IMR-90 (cell line): ENCODE measurements at regions of chr1 and their contacts with region 1.

Region 1: DNA sequence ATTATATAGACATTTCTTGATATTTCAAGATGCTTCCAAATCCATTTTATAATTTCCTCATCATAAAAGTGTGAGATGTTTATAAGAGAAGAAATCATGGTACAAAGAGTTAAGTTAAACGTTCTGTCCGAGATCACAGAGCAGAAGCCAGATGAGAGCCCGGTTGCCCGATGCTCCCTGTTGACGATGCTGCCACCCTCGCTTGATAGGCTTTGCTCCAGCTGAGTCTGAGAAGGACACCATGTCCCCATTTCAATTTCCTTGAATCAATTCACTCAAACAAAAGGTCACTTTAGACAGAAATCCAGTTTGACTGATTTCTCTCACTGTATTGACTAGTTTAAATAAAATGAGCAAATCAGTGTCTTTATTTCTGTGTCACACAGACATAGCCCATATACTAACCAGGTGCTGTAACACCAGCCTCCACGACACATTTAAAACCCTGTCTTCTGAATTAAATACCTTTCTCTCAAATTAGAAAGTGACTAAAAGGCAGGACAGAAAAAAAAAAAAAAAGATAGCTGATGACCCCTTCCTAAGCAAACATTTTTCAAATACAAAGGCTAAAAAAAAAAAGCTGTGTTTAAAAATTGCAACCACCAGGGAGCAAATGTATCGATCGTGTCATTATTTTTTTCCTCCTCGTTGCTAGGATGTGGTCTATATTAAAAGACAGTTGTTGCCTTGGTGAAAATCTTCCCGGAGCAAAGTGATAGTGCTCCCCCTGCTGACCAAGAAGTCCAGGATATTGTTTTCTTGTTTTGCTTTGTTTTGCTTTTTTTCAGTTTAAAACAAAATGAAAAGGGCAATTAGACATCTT is 35.2 kb downstream of the DNASE2B start:
- DNase-seq: peak; percentile 78
- ATAC-seq: peak; percentile 85
- H3K4me3 ChIP-seq: no peak overlapping the region
- H3K27ac ChIP-seq: no peak overlapping the region
- H3K4me1 ChIP-seq: no peaks in the 10 kb centered on the region; the same call in 1 of the 2 replicates
- H3K27me3 ChIP-seq: no peaks in the 10 kb centered on the region
- CTCF ChIP-seq: peak; percentile 85
- POLR2A ChIP-seq: no peak
- RAD21 ChIP-seq: peak; percentile 91

Region 2: DNA sequence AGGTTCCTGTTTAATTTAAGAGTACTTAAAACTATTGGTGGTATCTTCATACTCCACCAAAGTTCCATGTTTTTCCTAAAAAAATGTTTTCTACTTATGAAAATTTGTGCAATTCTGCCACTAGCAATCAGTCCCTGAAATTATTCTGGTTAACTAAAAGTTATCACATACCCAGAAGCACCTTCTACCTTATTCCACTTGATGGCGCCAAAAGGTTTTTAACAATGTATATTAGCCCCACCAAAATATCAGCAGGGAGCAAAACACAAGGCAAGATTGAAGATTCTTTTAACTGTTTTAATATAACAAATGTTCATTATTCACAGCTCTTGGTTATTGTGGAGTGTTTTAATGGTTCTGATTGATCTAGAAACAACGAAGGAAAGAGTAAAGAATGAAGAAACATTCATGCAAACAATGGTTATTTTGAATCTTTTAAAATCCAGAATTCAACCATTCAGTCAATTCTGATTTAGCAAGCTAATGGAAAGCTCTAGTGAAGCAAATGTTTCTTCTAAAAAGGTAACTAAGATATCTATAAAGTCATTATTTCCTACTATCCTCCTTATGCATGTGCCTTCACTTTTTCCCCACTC is 501.7 kb before region 1 on chr1:
- CTCF ChIA-PET with region 1: no interaction called
- POLR2A ChIA-PET with region 1: no interaction called
- dilution Hi-C with region 1: no loop called
- in situ Hi-C with region 1: loop called (anchors 10 kb)
- intact Hi-C with region 1: loop called (anchors 2 kb)
- DNase-seq: peak; percentile 60
- ATAC-seq: peak; percentile 76
- H3K4me3 ChIP-seq: no peak overlapping the region
- H3K27ac ChIP-seq: no peak overlapping the region
- H3K4me1 ChIP-seq: peaks cover 4% of the 10 kb centered on the region; the same call in 1 of the 2 replicates
- H3K27me3 ChIP-seq: no peaks in the 10 kb centered on the region
- CTCF ChIP-seq: peak; percentile 84
- POLR2A ChIP-seq: no peak
- RAD21 ChIP-seq: peak; percentile 84

Region 3: GRCh38 chr1:84077476-84078107 is 355.9 kb before region 1 on chr1:
- CTCF ChIA-PET with region 1: no interaction called
- POLR2A ChIA-PET with region 1: no interaction called
- dilution Hi-C with region 1: no loop called
- in situ Hi-C with region 1: no loop called
- intact Hi-C with region 1: loop called (anchors 5 kb)
- DNase-seq: peak; percentile 64
- ATAC-seq: peak; percentile 94
- H3K4me3 ChIP-seq: peak overlapping the region; percentile 93
- H3K27ac ChIP-seq: peak overlapping the region; percentile 98
- H3K4me1 ChIP-seq: no peaks in the 10 kb centered on the region; the same call in 1 of the 2 replicates
- H3K27me3 ChIP-seq: no peaks in the 10 kb centered on the region
- CTCF ChIP-seq: no peak
- POLR2A ChIP-seq: peak; percentile 81
- RAD21 ChIP-seq: no peak

Region 4: GRCh38 chr1:84143796-84144565 is 289.5 kb before region 1 on chr1 and contains the start of gene PRKACB:
- CTCF ChIA-PET with region 1: interaction called, 5 read pairs
- POLR2A ChIA-PET with region 1: no interaction called
- dilution Hi-C with region 1: loop called (anchors 25 kb)
- in situ Hi-C with region 1: loop called (anchors 5 kb)
- intact Hi-C with region 1: loop called (anchors 1 kb)
- DNase-seq: peak; percentile 62
- ATAC-seq: peak; percentile 68
- H3K4me3 ChIP-seq: no peak within 1 kb of the TSS
- H3K27ac ChIP-seq: no peak within 1 kb of the TSS
- H3K4me1 ChIP-seq: peaks cover 5% of the 10 kb centered on the region
- H3K27me3 ChIP-seq: no peaks in the 10 kb centered on the region
- CTCF ChIP-seq: no peak
- POLR2A ChIP-seq: no peak
- RAD21 ChIP-seq: no peak
- total RNA-seq, gene PRKACB: 8.2 and 14.2 TPM in 2 replicates

Region 5: GRCh38 chr1:84247425-84248220 is 185.8 kb before region 1 on chr1:
- CTCF ChIA-PET with region 1: interaction called, 3 read pairs
- POLR2A ChIA-PET with region 1: no interaction called
- dilution Hi-C with region 1: no loop called
- in situ Hi-C with region 1: no loop called
- intact Hi-C with region 1: loop called (anchors 5 kb)
- DNase-seq: peak; percentile 96
- ATAC-seq: peak; percentile 93
- H3K4me3 ChIP-seq: no peak overlapping the region
- H3K27ac ChIP-seq: peak overlapping the region; percentile 62; the same call in 1 of the 2 replicates
- H3K4me1 ChIP-seq: peaks cover 7% of the 10 kb centered on the region; the same call in 1 of the 2 replicates
- H3K27me3 ChIP-seq: no peaks in the 10 kb centered on the region
- CTCF ChIP-seq: no peak
- POLR2A ChIP-seq: 0 out of 2 replicates have a peak, but pooled peaks have one; percentile 43
- RAD21 ChIP-seq: no peak

Region 6: DNA sequence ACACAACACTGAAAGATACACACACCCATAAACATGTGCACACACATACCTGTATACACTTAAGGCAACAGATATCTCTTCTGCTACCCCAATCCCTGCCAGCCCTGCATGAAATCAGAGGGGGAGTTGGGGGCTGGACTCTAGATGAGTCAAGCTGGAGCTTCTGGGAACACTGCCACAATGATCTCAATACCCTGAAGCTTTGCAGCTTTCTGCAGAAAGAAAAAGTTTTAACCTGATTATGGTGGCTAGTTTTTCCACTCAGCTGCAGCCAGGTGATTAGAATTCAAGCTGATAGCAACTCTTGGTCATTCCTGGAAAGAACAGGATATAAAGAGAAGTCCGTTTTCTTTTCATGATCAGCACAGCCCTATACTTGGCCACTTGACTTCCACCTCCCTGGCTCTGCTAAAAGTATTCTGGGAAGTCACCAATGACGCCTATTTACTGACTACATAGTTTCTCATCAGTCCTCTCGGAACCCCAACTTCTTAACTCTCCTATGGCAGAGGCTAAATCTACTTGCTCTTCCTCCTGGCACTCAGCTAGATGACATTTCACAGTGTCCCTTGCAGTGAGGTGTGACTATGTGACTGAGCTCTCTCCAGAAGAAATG is 55.9 kb before region 1 on chr1:
- CTCF ChIA-PET with region 1: no interaction called
- POLR2A ChIA-PET with region 1: no interaction called
- dilution Hi-C with region 1: no loop called
- in situ Hi-C with region 1: no loop called
- intact Hi-C with region 1: loop called (anchors 5 kb)
- DNase-seq: peak; percentile 92
- ATAC-seq: peak; percentile 71
- H3K4me3 ChIP-seq: no peak overlapping the region
- H3K27ac ChIP-seq: no peak overlapping the region
- H3K4me1 ChIP-seq: peaks cover 20% of the 10 kb centered on the region
- H3K27me3 ChIP-seq: no peaks in the 10 kb centered on the region
- CTCF ChIP-seq: no peak
- POLR2A ChIP-seq: no peak
- RAD21 ChIP-seq: no peak

Region 7: GRCh38 chr1:84450910-84451309 is 17.4 kb after region 1 on chr1:
- CTCF ChIA-PET with region 1: no interaction called
- POLR2A ChIA-PET with region 1: no interaction called
- dilution Hi-C with region 1: no loop called
- in situ Hi-C with region 1: no loop called
- intact Hi-C with region 1: no loop called
- DNase-seq: peak; percentile 32
- ATAC-seq: peak; percentile 42; the same call in 1 of the 2 replicates
- H3K4me3 ChIP-seq: no peak overlapping the region
- H3K27ac ChIP-seq: no peak overlapping the region
- H3K4me1 ChIP-seq: no peaks in the 10 kb centered on the region
- H3K27me3 ChIP-seq: peaks cover 8% of the 10 kb centered on the region
- CTCF ChIP-seq: no peak
- POLR2A ChIP-seq: no peak
- RAD21 ChIP-seq: no peak